Posterior vena cava (tissue), 2 donors: ENCODE measurements at regions of chr10 and their contacts with region 1.

Region 1: DNA sequence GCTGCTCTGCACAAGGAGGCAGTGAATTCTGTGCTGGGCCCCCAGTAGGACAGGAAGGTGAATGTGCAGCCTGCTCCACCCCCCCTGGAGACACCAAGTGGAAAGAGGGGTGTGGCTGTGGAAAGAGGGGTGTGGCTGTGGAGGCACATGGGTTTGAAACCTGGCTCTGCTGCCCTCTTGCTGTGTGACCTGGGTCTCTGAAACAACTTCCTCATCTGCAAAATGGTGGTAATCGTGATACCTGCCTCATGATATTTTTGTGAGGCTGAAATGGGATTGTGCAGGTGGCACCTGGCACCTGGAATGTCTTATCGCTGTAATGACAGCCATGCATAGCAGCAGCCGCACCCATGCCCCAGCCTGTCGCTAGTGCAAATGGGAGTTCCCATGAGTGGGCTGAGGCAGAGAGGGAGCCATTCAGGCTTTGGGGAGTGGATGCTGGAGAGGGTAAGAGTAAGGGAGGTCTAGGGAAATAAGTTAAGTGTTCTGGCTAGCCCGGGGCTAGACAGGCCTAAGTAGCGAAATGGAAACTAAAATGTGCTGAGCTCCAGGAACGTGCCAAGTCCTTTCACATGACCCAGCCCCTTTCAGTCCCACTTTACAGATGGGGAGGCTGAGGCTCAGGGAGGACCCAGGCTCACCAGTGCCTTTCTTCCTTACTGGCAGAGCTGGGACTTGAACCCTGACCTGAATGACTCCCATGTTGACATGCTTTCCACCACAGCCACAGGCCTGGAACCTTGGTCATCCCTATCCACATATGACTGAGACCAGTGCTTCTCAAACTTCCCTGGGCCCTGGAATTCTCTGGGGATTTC is 35.0 kb downstream of the C10orf105 start:
- DNase-seq: no peak

Region 2: DNA sequence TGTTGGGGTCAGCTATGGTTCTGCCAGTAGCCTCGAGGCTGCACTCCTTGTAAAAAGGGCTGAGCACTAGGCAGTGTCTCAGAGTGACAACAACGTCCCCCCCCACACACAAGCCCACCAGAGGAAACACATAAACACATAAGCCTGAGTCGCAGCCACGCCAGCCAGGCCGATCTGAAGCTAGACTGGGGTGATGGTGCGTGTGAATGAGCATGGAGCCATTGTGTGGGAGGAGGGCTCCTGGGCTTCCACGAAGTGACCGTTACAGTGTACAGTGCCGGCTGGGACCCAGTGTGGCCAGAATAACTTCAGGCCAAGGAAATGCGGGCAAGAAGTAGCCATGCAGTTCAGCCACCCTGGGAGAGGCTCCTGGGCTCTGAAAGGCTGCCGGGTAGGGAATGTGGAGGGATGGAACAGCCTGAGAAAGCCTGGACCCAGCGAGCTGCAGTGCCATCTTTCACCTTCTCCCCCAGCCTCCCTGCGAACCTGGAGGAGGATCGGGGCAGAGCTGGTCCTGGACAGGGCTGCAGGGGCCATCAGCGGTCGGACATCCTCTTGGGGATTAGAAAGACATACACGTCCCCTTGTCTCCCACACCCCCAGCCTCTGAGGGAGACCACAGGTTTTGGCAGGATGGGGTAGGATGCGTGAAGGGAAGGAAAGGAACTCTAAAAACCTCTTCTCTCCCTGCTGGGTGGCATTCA is 38.9 kb after region 1 on chr10:
- intact Hi-C with region 1: no loop called
- DNase-seq: no peak

Region 3: GRCh38 chr10:71734797-71735196 is 50.2 kb after region 1 on chr10:
- intact Hi-C with region 1: loop called in 1 of 2 experiments (anchors 1 kb)
- DNase-seq: no peak

Region 4: DNA sequence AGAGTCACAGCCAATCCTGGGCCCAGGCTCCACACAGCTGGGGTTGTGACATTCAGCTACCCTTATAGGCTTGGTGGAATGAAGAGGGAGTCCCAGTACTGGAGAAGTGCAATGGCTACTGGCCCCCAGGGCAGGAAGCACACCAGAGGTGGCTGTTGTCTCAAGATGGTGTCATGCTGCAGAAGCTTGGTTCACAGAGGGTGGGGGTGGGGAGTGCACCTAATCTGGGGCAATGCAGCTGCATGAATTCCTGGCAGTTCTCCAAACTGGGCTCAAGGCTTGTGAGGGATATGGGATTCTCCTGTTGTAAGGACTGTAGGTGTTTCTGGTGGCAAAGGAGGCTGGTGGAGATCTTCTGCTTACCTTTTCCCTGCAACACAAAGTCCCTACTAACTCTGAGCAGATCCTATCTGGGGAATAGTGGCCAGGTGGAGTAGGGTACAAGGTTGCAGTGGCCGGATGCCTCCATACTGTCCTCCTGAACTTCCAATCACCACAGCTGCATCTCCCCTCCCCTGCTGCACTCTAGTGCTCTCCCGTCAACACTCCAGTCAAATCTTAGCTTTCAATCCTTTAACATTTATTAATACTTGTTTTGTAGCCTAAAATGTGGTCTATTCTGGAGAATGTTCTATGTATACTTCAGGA is 1297.4 kb after region 1 on chr10:
- intact Hi-C with region 1: loop called in 1 of 2 experiments (anchors 10 kb)
- DNase-seq: no peak